ENCODE measurements at regions of chr1 and their contacts with region 1.

Region 1: GRCh38 chr1:92960395-92961130 is 699 bp downstream of the DIPK1A start:
- DNase-seq: peak in 8 of 9 donors; percentile 57 to 85 (median 76)
- ATAC-seq: peak; percentile 65
- H3K4me3 ChIP-seq: peak overlapping the region; percentile 58
- H3K4me3 Mint-ChIP-seq: peak overlapping the region in 9 of 10 donors; percentile 86 to 97 (median 90)
- H3K27ac ChIP-seq: peak overlapping the region; percentile 100
- H3K27ac Mint-ChIP-seq: peak overlapping the region; percentile 95 to 99 (median 98)
- H3K4me1 ChIP-seq: peaks cover 39 to 55% of the 10 kb centered on the region in 2 donors
- H3K4me1 Mint-ChIP-seq: peaks cover 37 to 46% (median 41%) of the 10 kb centered on the region in 7 donors
- H3K27me3 ChIP-seq: no peaks in the 10 kb centered on the region
- H3K27me3 Mint-ChIP-seq: no peaks in the 10 kb centered on the region

Region 2: DNA sequence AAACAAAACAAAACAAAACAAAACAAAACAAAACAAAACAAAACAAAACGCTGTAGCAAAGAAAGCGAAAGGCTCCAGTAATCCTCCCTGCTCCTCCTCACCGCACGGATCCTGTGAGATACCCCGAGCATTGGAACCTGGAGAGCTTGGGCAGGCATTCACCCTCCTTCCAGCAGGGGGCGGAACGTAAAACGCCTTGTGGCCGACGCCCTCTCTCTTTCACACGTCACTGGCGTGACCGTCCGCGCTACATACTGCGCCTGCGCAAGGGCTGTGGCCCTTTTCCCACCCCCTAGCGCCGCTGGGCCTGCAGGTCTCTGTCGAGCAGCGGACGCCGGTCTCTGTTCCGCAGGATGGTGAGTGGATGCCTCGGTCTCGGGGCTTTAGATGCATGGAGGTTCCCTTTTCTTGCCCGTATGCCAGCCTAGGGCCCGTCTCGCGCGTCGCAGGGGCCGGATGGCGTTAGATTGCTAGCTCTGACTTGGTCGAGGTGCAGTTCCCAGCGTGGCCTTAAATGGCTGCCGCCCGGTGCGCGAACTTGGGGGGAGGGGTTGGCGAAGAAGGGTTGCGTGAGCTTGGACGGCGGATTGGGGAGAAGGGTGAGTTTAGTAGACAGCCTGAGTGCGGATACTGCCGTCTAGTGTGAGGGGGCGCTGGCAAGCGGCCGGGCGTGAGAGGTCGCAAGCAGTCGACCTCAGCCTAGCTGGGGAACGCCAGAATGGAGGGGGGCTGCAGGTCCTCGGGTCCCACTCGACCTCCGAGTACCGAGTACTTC is 128.6 kb before region 1 on chr1 and contains the start of gene RPL5:
- CTCF ChIA-PET with region 1: interaction called, 9 read pairs
- POLR2A ChIA-PET with region 1: interaction called, 28 read pairs
- intact Hi-C with region 1: loop called (anchors 1 kb)
- DNase-seq: peak; percentile 94 to 99 (median 98)
- ATAC-seq: peak; percentile 95
- H3K4me3 ChIP-seq: peak within 1 kb of the TSS; percentile 94
- H3K4me3 Mint-ChIP-seq: peak within 1 kb of the TSS; percentile 94 to 100 (median 98)
- H3K27ac ChIP-seq: peak within 1 kb of the TSS; percentile 94
- H3K27ac Mint-ChIP-seq: peak within 1 kb of the TSS; percentile 98 to 100 (median 99)
- H3K4me1 ChIP-seq: peaks cover 16 to 30% of the 10 kb centered on the region in 2 donors
- H3K4me1 Mint-ChIP-seq: peaks cover 29 to 54% (median 44%) of the 10 kb centered on the region in 7 donors
- H3K27me3 ChIP-seq: no peaks in the 10 kb centered on the region
- H3K27me3 Mint-ChIP-seq: peaks cover 0 to 5% (median 0%) of the 10 kb centered on the region in 5 donors
- total RNA-seq, gene RPL5: 764 to 1,693 (median 1,596) TPM

Region 3: DNA sequence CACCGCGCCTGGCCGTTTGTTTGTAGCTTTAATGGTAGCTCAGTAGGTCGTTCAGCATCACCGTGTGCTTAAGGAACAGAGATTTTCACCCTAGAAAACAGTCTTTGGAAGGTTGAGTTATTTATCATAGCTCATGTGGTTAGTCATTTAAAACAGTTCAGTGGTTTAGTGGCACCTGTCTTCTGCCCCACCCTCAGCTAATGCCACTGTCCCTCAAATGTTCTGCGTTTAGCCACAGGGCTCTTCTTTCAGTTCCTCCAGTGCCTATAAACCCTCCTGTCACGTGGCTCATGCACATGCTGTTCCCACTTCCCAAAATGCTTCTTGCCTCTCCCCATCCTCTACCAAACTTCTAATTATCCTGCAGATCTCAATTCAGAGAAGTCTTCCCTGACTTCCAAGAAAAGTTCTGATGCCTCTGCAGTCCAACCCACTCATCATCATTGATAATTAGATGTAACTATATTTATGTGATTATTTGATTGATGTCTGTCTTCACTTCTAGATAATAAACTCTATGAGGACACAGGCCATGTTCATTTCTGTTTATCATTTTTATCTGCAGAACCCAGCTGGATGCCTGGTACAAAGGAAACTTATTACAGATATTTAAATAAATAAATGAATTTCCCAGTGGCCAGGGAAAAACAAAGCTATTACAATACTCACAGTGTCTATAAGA is 15.1 kb after region 1 on chr1:
- CTCF ChIA-PET with region 1: interaction called, 22 read pairs
- POLR2A ChIA-PET with region 1: interaction called, 113 read pairs
- intact Hi-C with region 1: no loop called
- DNase-seq: no peak
- ATAC-seq: peak; percentile 61
- H3K4me3 ChIP-seq: no peak overlapping the region
- H3K4me3 Mint-ChIP-seq: peak overlapping the region in 1 of 10 donors; percentile 15
- H3K27ac ChIP-seq: no peak overlapping the region
- H3K27ac Mint-ChIP-seq: peak overlapping the region in 4 of 9 donors; percentile 9 to 69 (median 50)
- H3K4me1 ChIP-seq: peaks cover 12 to 39% of the 10 kb centered on the region in 2 donors
- H3K4me1 Mint-ChIP-seq: peaks cover 29 to 63% (median 34%) of the 10 kb centered on the region in 7 donors
- H3K27me3 ChIP-seq: no peaks in the 10 kb centered on the region
- H3K27me3 Mint-ChIP-seq: no peaks in the 10 kb centered on the region

Region 4: GRCh38 chr1:93002781-93003180 is 42.2 kb after region 1 on chr1:
- CTCF ChIA-PET with region 1: interaction called, 10 read pairs
- POLR2A ChIA-PET with region 1: interaction called, 6 read pairs
- intact Hi-C with region 1: no loop called
- DNase-seq: no peak
- ATAC-seq: no peak
- H3K4me3 ChIP-seq: no peak overlapping the region
- H3K4me3 Mint-ChIP-seq: no peak overlapping the region
- H3K27ac ChIP-seq: no peak overlapping the region
- H3K27ac Mint-ChIP-seq: no peak overlapping the region
- H3K4me1 ChIP-seq: no peaks in the 10 kb centered on the region
- H3K4me1 Mint-ChIP-seq: peaks cover 0 to 14% (median 1%) of the 10 kb centered on the region in 7 donors
- H3K27me3 ChIP-seq: no peaks in the 10 kb centered on the region
- H3K27me3 Mint-ChIP-seq: peaks cover 0 to 41% (median 4%) of the 10 kb centered on the region in 5 donors

Region 5: DNA sequence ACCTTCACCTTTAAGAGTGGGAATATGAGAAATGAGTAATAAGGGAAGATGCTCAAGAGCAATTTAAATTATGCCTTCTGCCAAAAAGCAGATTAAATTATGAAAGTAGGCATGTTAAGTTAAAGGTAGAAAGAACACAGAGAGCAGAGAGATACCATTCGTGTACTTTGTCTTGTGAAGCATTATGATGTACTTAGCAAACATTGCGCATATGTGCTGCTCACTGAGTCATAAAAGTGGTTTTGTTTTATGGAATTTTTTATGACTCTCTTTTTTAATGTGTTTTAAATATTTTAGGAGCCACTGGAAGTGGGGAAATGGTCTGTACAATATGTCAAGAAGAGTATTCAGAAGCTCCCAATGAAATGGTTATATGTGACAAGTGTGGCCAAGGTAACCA is 153.8 kb after region 1 on chr1:
- CTCF ChIA-PET with region 1: no interaction called
- POLR2A ChIA-PET with region 1: no interaction called
- intact Hi-C with region 1: no loop called
- DNase-seq: no peak
- ATAC-seq: no peak
- H3K4me3 ChIP-seq: no peak overlapping the region
- H3K4me3 Mint-ChIP-seq: no peak overlapping the region
- H3K27ac ChIP-seq: no peak overlapping the region
- H3K27ac Mint-ChIP-seq: no peak overlapping the region
- H3K4me1 ChIP-seq: no peaks in the 10 kb centered on the region
- H3K4me1 Mint-ChIP-seq: peaks cover 15 to 36% (median 21%) of the 10 kb centered on the region in 7 donors
- H3K27me3 ChIP-seq: no peaks in the 10 kb centered on the region
- H3K27me3 Mint-ChIP-seq: no peaks in the 10 kb centered on the region

Region 6: DNA sequence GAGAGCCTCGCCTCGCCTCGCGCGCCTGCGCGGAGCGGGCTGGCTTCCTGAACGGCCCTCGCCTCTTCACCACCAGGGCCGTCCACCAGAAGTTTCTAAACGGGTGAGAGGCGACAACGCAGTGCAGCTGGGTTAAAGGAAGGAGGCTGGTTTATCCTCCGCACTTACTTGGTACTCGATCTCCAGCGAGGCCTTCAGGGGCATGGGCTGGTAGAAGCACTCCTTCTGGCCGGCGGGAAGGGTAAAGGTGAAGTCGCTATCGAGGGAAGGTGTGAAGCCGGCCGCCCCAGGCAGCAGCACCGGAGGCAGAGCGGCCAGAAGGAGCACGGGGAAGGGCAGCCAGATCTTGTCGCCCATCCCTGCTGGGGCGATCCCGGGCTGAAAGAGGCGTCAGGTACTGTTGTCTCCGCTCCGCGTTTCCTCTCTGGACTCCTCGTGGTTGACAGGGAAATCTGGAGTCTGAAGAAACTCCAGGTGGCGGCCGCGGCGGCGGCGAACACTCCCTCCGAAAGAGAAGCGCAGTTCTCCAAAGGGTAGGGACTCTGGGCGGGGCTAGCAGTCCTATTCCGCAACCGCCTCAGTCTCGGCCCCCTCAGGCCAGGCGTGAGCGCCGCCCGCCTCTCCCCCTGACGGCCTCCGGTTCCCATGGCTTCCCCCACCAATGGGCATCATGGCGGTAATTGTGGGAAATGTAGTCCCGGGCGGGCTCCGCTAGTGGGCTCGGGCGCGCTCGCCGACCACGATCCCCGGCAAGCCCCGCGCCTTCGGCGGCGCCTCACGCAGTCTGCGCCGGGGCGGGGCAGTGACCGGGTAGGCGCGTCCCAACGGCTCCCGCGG is 219.5 kb after region 1 on chr1 and contains the start of gene TMED5:
- CTCF ChIA-PET with region 1: no interaction called
- POLR2A ChIA-PET with region 1: no interaction called
- intact Hi-C with region 1: loop called (anchors 1 to 2 kb)
- DNase-seq: peak; percentile 94 to 97 (median 96)
- ATAC-seq: peak; percentile 89
- H3K4me3 ChIP-seq: peak within 1 kb of the TSS; percentile 95
- H3K4me3 Mint-ChIP-seq: peak within 1 kb of the TSS; percentile 91 to 98 (median 94)
- H3K27ac ChIP-seq: peak within 1 kb of the TSS; percentile 91
- H3K27ac Mint-ChIP-seq: peak within 1 kb of the TSS; percentile 86 to 99 (median 97)
- H3K4me1 ChIP-seq: peaks cover 24 to 30% of the 10 kb centered on the region in 2 donors
- H3K4me1 Mint-ChIP-seq: peaks cover 30 to 59% (median 47%) of the 10 kb centered on the region in 7 donors
- H3K27me3 ChIP-seq: no peaks in the 10 kb centered on the region
- H3K27me3 Mint-ChIP-seq: no peaks in the 10 kb centered on the region
- total RNA-seq, gene TMED5: 37.8 to 60.0 (median 47.4) TPM

Region 7: DNA sequence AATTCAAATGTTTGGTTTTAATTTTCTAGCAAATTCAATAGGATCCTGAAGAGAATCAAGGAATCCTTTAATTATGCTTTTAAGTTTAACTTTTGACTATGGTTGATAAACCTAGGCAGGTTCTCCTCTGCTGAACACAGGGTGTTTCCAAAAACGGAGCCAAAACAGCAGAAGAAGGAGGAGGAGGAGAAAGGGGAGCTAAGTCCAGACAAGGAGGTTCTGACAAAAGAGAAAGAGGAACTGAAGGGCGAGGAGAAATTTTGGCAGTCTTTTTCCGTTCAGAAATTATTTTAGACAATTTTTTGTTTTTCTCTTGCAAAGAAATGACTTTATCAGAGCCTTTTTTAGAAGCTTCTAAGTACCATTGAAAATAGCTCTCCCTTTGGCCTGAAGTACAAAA is 454.2 kb after region 1 on chr1:
- CTCF ChIA-PET with region 1: no interaction called
- POLR2A ChIA-PET with region 1: no interaction called
- intact Hi-C with region 1: no loop called
- DNase-seq: no peak
- ATAC-seq: no peak
- H3K4me3 ChIP-seq: no peak overlapping the region
- H3K4me3 Mint-ChIP-seq: no peak overlapping the region
- H3K27ac ChIP-seq: no peak overlapping the region
- H3K27ac Mint-ChIP-seq: no peak overlapping the region
- H3K4me1 ChIP-seq: no peaks in the 10 kb centered on the region
- H3K4me1 Mint-ChIP-seq: peaks cover 0 to 5% (median 0%) of the 10 kb centered on the region in 7 donors
- H3K27me3 ChIP-seq: no peaks in the 10 kb centered on the region
- H3K27me3 Mint-ChIP-seq: peaks cover 0 to 24% (median 7%) of the 10 kb centered on the region in 5 donors